Activated CD4-positive, alpha-beta memory T cell treated with anti-CD3 and anti-CD28 coated beads for 36 hours (primary cell): ENCODE measurements at regions of chr1 and their contacts with region 1.

Region 1: DNA sequence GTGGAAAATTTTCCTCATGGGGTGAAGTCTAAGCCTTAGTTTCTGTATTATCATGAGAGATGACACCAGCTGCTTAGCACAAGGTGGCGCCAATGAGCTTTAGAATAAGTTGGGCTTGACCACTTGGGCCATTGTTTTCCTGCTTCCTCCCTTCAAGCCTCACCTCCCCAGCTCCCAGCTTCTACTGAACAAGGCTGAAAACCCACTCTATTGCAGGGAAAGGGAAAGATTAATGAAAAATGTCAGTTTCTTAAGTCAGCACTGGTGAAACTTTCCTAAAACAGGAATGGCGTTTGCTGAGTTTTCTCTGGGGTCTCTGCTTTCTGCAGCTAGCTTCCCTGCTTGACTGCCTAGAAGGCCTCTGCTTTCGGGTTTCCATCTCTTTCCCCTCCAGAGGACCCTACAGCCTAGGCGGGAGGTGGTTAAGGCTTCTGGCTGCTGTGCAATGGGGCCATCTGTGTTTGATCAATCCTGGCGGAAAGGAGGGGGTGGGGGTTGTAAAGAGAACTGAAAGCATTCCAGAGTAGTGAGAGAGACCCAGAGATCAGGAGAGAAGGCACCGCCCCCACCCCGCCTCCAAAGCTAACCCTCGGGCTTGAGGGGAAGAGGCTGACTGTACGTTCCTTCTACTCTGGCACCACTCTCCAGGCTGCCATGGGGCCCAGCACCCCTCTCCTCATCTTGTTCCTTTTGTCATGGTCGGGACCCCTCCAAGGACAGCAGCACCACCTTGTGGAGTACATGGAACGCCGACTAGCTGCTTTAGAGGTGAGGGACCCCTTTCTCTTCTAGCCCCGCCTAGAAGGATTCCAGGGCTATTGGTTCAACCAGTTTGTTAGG is at the start of gene OLFML3:
- DNase-seq: peak; percentile 67
- H3K4me3 Mint-ChIP-seq: no peak within 1 kb of the TSS
- H3K27ac Mint-ChIP-seq: no peak within 1 kb of the TSS
- H3K4me1 Mint-ChIP-seq: peaks cover 33% of the 10 kb centered on the region
- H3K27me3 Mint-ChIP-seq: no peaks in the 10 kb centered on the region
- total RNA-seq, gene OLFML3: 0.21 TPM in 1 of 2 experiments, not detected in the other

Region 2: GRCh38 chr1:113963281-113963906 is 15.7 kb before region 1 on chr1:
- CTCF ChIA-PET with region 1: interaction called, 14 read pairs
- POLR2A ChIA-PET with region 1: no interaction called
- intact Hi-C with region 1: no loop called
- DNase-seq: no peak
- H3K4me3 Mint-ChIP-seq: no peak overlapping the region
- H3K27ac Mint-ChIP-seq: no peak overlapping the region
- H3K4me1 Mint-ChIP-seq: no peaks in the 10 kb centered on the region
- H3K27me3 Mint-ChIP-seq: no peaks in the 10 kb centered on the region

Region 3: GRCh38 chr1:114263343-114263742 is 284.3 kb after region 1 on chr1:
- CTCF ChIA-PET with region 1: no interaction called
- POLR2A ChIA-PET with region 1: no interaction called
- intact Hi-C with region 1: loop called (anchors 5 kb)
- DNase-seq: no peak
- H3K4me3 Mint-ChIP-seq: no peak overlapping the region
- H3K27ac Mint-ChIP-seq: no peak overlapping the region
- H3K4me1 Mint-ChIP-seq: no peaks in the 10 kb centered on the region
- H3K27me3 Mint-ChIP-seq: peaks cover 6% of the 10 kb centered on the region